Transverse colon (tissue), 4 donors: ENCODE measurements at regions of chr10 and their contacts with region 1.

Region 1: DNA sequence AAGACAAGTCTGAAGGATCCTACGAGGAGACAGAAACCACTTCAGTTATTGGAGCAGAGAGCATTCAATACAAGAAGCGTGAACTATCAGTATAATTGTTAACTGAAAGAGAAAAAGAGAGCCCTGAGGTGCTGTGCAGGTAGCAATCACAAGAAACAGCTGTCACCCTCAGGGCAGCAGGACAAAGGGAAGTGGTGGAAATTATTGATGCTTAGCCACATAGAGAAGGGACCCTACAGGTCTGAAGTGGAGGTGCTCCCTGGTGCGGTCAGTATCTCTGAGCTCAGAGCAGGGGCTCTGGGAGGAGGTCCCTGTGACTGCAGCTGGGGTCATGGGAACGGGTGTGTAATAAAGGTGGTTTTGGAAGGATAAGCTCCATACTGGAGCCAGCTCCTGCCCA is 97.8 kb upstream of the KLF6 start:
- DNase-seq: no peak
- H3K4me3 ChIP-seq: no peak overlapping the region
- H3K27ac ChIP-seq: no peak overlapping the region
- H3K4me1 ChIP-seq: peaks cover 4 to 19% (median 12%) of the 10 kb centered on the region in 4 donors
- H3K27me3 ChIP-seq: no peaks in the 10 kb centered on the region
- CTCF ChIP-seq: no peak
- EP300 ChIP-seq: no peak
- POLR2A ChIP-seq: no peak

Region 2: GRCh38 chr10:3502319-3503017 is 380.4 kb before region 1 on chr10:
- in situ Hi-C with region 1: no loop called
- intact Hi-C with region 1: no loop called
- DNase-seq: no peak
- H3K4me3 ChIP-seq: no peak overlapping the region
- H3K27ac ChIP-seq: no peak overlapping the region
- H3K4me1 ChIP-seq: no peaks in the 10 kb centered on the region
- H3K27me3 ChIP-seq: no peaks in the 10 kb centered on the region
- CTCF ChIP-seq: no peak
- EP300 ChIP-seq: no peak
- POLR2A ChIP-seq: no peak

Region 3: GRCh38 chr10:4656576-4657182 is 773.8 kb after region 1 on chr10:
- in situ Hi-C with region 1: no loop called
- intact Hi-C with region 1: loop called (anchors 5 kb)
- DNase-seq: peak; percentile 72
- H3K4me3 ChIP-seq: no peak overlapping the region
- H3K27ac ChIP-seq: no peak overlapping the region
- H3K4me1 ChIP-seq: peaks cover 0 to 12% (median 1%) of the 10 kb centered on the region in 4 donors
- H3K27me3 ChIP-seq: no peaks in the 10 kb centered on the region
- CTCF ChIP-seq: peak; percentile 86 to 96 (median 89)
- EP300 ChIP-seq: no peak
- POLR2A ChIP-seq: no peak